ENCODE measurements at regions of chr5 and their contacts with region 1.

Region 1: GRCh38 chr5:149345147-149345875 is at the start of gene GRPEL2:
- DNase-seq: peak; percentile 74 to 98
- H3K4me3 ChIP-seq: peak within 1 kb of the TSS; percentile 70 to 76
- H3K27ac ChIP-seq: peak within 1 kb of the TSS; percentile 71 to 80
- H3K4me1 ChIP-seq: peaks cover 0 to 8% of the 10 kb centered on the region in 2 donors
- H3K27me3 ChIP-seq: no peaks in the 10 kb centered on the region
- CTCF ChIP-seq: no peak
- total RNA-seq, gene GRPEL2: 7.8 TPM

Region 2: DNA sequence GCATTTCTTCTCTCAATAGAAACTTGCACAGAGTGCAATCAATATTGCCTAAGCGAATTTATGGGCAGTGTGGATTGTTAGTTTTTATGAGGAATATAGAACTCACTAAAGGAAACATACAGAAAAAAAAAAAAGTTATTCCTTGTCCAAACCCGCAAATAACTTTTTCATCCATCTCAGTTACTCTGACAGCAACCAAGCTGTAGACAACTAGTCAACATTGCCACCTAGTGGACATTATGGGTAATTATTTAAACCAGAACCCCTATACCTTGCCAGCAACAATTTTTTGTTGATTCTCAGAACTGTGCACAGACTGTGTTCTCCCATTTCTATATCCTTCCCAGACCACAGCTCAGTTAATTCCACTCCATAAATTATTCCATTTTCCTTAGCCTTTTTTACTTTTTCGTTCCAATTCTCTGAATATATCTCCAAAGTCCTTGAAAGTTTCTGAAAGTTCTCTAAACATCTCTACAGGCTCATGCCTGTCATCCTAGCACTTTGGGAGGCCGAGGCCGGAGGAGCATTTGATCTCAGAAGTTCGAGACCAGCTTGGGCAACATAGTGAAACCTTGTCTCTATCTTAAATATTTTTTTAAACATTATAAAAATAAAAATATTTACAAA is 76.3 kb before region 1 on chr5:
- intact Hi-C with region 1: loop called (anchors 5 kb)
- DNase-seq: no peak
- H3K4me3 ChIP-seq: no peak overlapping the region
- H3K27ac ChIP-seq: no peak overlapping the region
- H3K4me1 ChIP-seq: peaks cover 0 to 3% of the 10 kb centered on the region in 2 donors
- H3K27me3 ChIP-seq: no peaks in the 10 kb centered on the region
- CTCF ChIP-seq: peak; percentile 53 to 61 (median 56)

Region 3: DNA sequence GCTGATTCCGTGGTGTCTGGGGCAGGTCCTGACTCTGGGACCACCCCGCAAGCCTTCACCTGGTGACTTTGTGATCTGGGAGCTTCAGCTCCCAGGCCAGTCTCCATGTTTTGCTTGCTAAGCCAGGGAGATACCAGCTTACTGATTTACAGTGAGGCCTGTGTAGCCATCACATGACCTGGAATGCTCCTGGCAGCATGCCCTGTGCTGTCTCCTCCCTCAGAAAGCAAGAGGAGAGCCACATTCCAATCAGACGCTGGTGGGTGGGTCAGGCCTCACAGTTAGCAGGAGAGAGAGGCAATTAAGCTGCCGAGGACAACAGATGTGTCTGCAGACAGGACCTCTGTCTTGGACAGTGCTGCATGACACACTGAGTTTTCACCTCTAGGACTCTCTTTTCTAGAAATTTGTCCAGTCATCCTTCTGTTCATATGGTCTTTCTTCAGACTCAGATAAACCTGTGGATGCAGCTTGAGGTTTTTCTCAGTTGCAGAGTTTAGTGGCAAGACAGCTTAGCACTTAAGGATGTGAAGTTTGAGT is 24.4 kb before region 1 on chr5:
- intact Hi-C with region 1: no loop called
- DNase-seq: peak in 1 of 2 donors; percentile 76
- H3K4me3 ChIP-seq: no peak overlapping the region
- H3K27ac ChIP-seq: peak overlapping the region in 1 of 2 donors; percentile 39
- H3K4me1 ChIP-seq: peaks cover 0 to 6% of the 10 kb centered on the region in 2 donors
- H3K27me3 ChIP-seq: no peaks in the 10 kb centered on the region
- CTCF ChIP-seq: no peak

Region 4: DNA sequence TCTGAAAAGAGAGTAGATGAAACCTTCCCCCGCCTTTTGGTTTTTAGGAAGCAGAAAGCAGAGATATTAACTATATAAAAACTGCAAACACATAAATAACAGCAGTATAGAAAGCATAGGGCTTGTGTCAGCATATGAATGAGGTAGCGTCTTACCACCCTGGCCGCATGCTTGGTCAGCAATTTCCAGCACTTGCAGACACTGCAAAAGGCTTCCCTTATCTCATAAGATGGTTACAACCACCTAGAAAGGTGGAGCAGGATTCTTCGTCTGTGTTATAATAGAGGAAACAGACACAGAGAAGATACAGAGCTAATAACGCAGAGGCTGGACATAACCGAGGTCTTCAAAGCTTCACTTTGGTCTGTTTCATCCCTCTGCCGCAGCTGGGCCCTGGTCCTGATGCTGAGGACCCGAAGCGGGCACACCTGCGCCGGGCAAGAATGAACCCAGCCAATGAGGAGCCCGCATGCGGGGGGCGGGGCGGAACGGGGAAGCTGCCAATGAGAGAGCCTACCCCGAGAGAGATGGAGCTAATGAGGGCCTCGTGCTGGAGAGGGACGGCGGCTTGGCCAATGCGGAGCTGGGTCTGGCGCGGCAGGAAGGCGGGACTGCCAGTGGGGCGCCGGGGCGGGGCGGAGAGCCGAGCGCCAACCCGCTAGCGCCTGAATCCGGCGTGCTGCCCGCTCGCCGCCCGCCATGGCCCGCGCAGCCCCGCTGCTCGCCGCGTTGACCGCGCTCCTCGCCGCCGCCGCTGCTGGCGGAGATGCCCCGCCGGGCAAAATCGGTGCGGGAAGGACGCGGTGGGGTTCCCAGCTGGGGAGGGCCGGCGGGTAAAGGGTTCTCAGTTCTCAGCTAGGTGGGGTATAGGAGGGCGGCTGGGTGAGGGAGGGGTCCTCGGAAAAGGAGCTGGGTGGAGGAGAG is 12.3 kb after region 1 on chr5 and contains the start of gene PCYOX1L:
- intact Hi-C with region 1: loop called (anchors 1 kb)
- DNase-seq: peak; percentile 88 to 98
- H3K4me3 ChIP-seq: peak within 1 kb of the TSS; percentile 54 to 68
- H3K27ac ChIP-seq: peak within 1 kb of the TSS; percentile 45 to 56
- H3K4me1 ChIP-seq: peaks cover 0 to 9% of the 10 kb centered on the region in 2 donors
- H3K27me3 ChIP-seq: no peaks in the 10 kb centered on the region
- CTCF ChIP-seq: no peak
- total RNA-seq, gene PCYOX1L: 1.5 TPM

Region 5: GRCh38 chr5:149605998-149606724 is 260.9 kb after region 1 on chr5:
- intact Hi-C with region 1: no loop called
- DNase-seq: no peak
- H3K4me3 ChIP-seq: no peak overlapping the region
- H3K27ac ChIP-seq: peak overlapping the region in 1 of 2 donors; percentile 42
- H3K4me1 ChIP-seq: no peaks in the 10 kb centered on the region
- H3K27me3 ChIP-seq: no peaks in the 10 kb centered on the region
- CTCF ChIP-seq: no peak